Endothelial cell of umbilical vein (primary cell): ENCODE measurements at regions of chr13 and their contacts with region 1.

Region 1: GRCh38 chr13:75345193-75345592 is 136.8 kb downstream of the TBC1D4 start:
- DNase-seq: peak; percentile 86
- H3K4me3 ChIP-seq: no peak overlapping the region
- H3K27ac ChIP-seq: peak overlapping the region; percentile 83
- H3K4me1 ChIP-seq: peaks cover 21% of the 10 kb centered on the region
- H3K27me3 ChIP-seq: no peaks in the 10 kb centered on the region
- CTCF ChIP-seq: no peak
- POLR2A ChIP-seq: no peak

Region 2: GRCh38 chr13:75357576-75358289 is 12.5 kb after region 1 on chr13:
- CTCF ChIA-PET with region 1: interaction called, 12 read pairs
- POLR2A ChIA-PET with region 1: no interaction called
- dilution Hi-C with region 1: no loop called
- intact Hi-C with region 1: no loop called
- DNase-seq: peak; percentile 78
- H3K4me3 ChIP-seq: no peak overlapping the region
- H3K27ac ChIP-seq: no peak overlapping the region
- H3K4me1 ChIP-seq: peaks cover 2% of the 10 kb centered on the region
- H3K27me3 ChIP-seq: no peaks in the 10 kb centered on the region
- CTCF ChIP-seq: peak; percentile 72 to 78
- POLR2A ChIP-seq: no peak

Region 3: GRCh38 chr13:76316998-76317527 is 971.9 kb after region 1 on chr13:
- CTCF ChIA-PET with region 1: no interaction called
- POLR2A ChIA-PET with region 1: no interaction called
- dilution Hi-C with region 1: no loop called
- intact Hi-C with region 1: no loop called
- DNase-seq: no peak
- H3K4me3 ChIP-seq: no peak overlapping the region
- H3K27ac ChIP-seq: no peak overlapping the region
- H3K4me1 ChIP-seq: no peaks in the 10 kb centered on the region
- H3K27me3 ChIP-seq: no peaks in the 10 kb centered on the region
- CTCF ChIP-seq: no peak
- POLR2A ChIP-seq: no peak